CD8-positive, alpha-beta T cell (primary cell): ENCODE measurements at regions of chr12 and their contacts with region 1.

Region 1: DNA sequence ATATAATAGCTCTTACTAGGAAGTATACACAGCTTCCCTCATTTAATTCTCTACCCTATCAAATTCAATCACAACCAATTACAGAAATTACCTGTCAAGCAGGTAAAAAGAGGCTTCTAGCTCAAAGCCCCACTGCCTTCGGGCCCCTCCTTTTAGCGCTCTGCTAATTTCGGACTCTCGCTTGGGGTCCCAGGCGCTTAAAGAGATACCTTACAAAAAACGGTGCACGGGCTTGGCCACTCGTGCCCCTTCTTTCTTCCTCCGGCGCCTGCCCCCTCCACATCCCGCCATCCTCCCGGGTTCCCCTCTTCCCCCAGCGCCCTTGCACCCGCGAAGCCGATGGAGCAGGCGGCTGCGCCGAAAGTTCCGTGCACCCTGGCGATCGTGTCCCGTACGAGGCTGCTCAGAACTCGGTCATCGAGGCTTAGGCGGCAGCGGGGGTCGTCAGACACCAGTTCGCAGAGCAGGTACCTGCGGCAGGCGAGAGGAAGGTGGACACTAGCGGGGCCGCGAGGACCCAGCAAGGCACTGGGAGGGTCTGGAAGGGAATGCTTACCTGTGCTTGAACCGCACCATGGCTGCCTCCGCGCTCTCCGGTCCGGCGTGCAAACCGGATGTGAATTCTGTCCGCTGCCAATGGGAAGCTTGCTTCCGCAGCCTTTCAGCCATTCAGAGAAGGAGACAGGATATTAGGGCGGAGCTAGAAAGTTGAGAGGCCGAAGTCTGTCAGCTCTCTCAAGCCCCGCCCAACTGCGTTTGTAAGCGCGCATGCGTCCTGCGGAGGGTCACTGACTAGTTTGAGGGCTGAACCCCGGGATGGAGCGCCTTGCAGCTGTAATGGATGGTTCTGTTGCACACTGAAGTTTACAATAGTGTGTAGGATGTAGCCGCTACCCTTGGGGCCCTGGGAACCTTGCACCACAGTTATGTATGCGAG is at the start of gene POP5:
- DNase-seq: peak; percentile 81 to 98 (median 92)
- ATAC-seq: peak; percentile 92
- H3K4me3 ChIP-seq: peak within 1 kb of the TSS; percentile 91 to 94
- H3K4me3 Mint-ChIP-seq: peak within 1 kb of the TSS; percentile 99
- H3K27ac ChIP-seq: peak within 1 kb of the TSS; percentile 71 to 76
- H3K27ac Mint-ChIP-seq: peak within 1 kb of the TSS; percentile 93
- H3K4me1 ChIP-seq: peaks cover 23% of the 10 kb centered on the region
- H3K4me1 Mint-ChIP-seq: peaks cover 44% of the 10 kb centered on the region
- H3K27me3 ChIP-seq: peaks cover 0 to 7% of the 10 kb centered on the region in 2 experiments
- H3K27me3 Mint-ChIP-seq: peaks cover 12% of the 10 kb centered on the region
- CTCF ChIP-seq: no peak
- total RNA-seq, gene POP5: 18.1 to 19.2 TPM

Region 2: DNA sequence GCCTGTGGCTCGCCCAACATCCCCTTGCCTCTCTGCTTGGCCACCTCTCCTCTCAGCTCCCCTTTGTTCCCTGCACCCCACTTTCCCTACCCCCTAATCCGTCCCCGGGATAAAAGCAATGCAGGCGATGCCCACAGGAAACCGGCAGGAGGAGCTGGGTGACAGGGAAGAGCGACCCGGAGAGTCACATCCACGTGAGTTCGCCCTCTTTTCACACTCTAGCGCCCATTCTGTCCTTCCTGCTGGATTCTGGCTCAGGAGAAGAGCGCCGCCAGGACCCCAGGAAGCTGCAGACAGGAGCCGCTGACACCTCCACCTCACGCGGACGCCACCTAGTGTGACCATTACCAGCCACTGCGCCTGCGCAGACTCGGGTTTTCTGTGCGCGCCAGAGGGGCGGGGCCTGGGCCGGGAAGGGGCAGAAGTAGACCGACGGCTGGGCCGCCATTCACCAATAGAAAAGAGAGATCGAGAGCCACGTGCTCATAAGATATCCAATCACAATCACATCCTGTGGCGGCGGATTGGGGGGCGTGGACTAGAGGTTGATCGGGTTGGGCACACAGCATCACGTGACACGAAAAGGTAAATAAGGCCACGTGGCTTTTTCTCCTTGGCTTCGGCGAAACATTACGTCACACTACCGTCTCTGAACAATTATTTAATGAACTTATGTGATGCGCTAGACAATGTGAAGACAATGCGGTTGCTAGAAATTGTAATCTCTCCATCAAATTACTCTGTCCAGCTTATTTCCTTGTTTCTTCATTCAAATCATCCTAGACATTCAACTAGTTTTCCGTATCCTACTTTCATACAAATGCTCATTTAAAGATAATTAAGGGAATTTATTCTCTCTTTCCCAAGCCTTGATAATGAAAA is 263.6 kb before region 1 on chr12:
- CTCF ChIA-PET with region 1: no interaction called
- POLR2A ChIA-PET with region 1: no interaction called
- intact Hi-C with region 1: loop called in 1 of 2 experiments (anchors 5 kb)
- DNase-seq: peak; percentile 99 to 100 (median 100)
- ATAC-seq: peak; percentile 98
- H3K4me3 ChIP-seq: peak overlapping the region; percentile 61 to 65
- H3K4me3 Mint-ChIP-seq: peak overlapping the region; percentile 88
- H3K27ac ChIP-seq: peak overlapping the region; percentile 75 to 86
- H3K27ac Mint-ChIP-seq: peak overlapping the region; percentile 97
- H3K4me1 ChIP-seq: peaks cover 5% of the 10 kb centered on the region
- H3K4me1 Mint-ChIP-seq: peaks cover 13% of the 10 kb centered on the region
- H3K27me3 ChIP-seq: no peaks in the 10 kb centered on the region
- H3K27me3 Mint-ChIP-seq: no peaks in the 10 kb centered on the region
- CTCF ChIP-seq: peak; percentile 58

Region 3: GRCh38 chr12:120534203-120534702 is 46.8 kb before region 1 on chr12 and contains the start of gene RNF10:
- CTCF ChIA-PET with region 1: interaction called, 4 read pairs
- POLR2A ChIA-PET with region 1: interaction called, 14 read pairs
- intact Hi-C with region 1: loop called in 1 of 2 experiments (anchors 1 kb)
- DNase-seq: peak; percentile 48 to 92 (median 73)
- ATAC-seq: peak; percentile 69
- H3K4me3 ChIP-seq: peak within 1 kb of the TSS; percentile 89 to 95
- H3K4me3 Mint-ChIP-seq: peak within 1 kb of the TSS; percentile 96
- H3K27ac ChIP-seq: peak within 1 kb of the TSS; percentile 76 to 83
- H3K27ac Mint-ChIP-seq: peak within 1 kb of the TSS; percentile 95
- H3K4me1 ChIP-seq: peaks cover 38% of the 10 kb centered on the region
- H3K4me1 Mint-ChIP-seq: peaks cover 57% of the 10 kb centered on the region
- H3K27me3 ChIP-seq: no peaks in the 10 kb centered on the region
- H3K27me3 Mint-ChIP-seq: no peaks in the 10 kb centered on the region
- CTCF ChIP-seq: no peak
- total RNA-seq, gene RNF10: 402 to 410 TPM

Region 4: GRCh38 chr12:120649442-120650232 is 68.6 kb after region 1 on chr12:
- CTCF ChIA-PET with region 1: interaction called, 101 read pairs
- POLR2A ChIA-PET with region 1: interaction called, 5 read pairs
- intact Hi-C with region 1: loop called (anchors 1 kb)
- DNase-seq: no peak
- ATAC-seq: no peak
- H3K4me3 ChIP-seq: no peak overlapping the region
- H3K4me3 Mint-ChIP-seq: no peak overlapping the region
- H3K27ac ChIP-seq: no peak overlapping the region
- H3K27ac Mint-ChIP-seq: no peak overlapping the region
- H3K4me1 ChIP-seq: peaks cover 7% of the 10 kb centered on the region
- H3K4me1 Mint-ChIP-seq: peaks cover 9% of the 10 kb centered on the region
- H3K27me3 ChIP-seq: peaks cover 14 to 21% of the 10 kb centered on the region in 2 experiments
- H3K27me3 Mint-ChIP-seq: peaks cover 47% of the 10 kb centered on the region
- CTCF ChIP-seq: peak; percentile 23

Region 5: DNA sequence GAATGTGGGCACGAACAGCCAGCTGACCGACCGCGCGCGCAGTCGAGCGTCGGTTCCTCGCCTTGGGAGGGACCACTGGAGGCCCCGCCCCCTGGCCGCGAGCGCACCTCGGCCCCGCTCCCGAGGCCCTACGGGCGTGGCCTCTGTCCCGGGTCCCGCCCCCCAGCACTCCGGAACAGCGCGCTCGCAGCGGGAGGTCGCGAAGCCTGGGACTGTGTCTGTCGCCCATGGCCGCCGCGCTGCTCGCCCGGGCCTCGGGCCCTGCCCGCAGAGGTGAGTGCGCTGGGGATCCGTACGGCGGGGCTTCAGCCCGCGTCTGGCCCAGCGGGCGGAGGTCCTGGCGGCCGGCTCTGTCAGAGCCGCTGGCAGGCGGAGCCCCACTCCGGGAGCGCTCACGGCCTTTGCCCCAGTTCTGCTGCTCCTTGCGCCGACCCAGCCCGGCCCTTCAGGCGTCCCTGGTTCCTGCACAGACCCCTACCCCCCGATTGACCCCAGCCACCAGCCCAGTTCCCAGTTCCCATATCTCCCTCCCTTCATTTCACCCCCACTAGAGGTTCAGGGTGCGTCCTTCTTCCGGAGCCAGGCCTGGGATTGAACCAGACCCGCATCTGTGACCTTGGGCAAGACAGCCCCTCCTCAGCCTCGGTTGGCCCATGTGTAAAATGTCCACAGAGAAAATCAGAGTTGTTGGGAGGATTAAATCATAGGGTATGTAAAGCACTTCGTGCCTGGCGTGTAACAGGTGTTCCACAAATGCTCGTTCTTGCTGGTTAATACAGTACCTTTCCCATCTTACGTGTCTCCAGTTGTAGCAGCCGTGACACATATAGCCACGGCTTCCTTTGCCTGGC is 144.8 kb after region 1 on chr12 and contains the start of gene ACADS:
- CTCF ChIA-PET with region 1: interaction called, 3 read pairs
- POLR2A ChIA-PET with region 1: no interaction called
- intact Hi-C with region 1: loop called in 1 of 2 experiments (anchors 5 kb)
- DNase-seq: peak; percentile 75 to 93 (median 89)
- ATAC-seq: peak; percentile 100
- H3K4me3 ChIP-seq: peak within 1 kb of the TSS; percentile 49 to 64
- H3K4me3 Mint-ChIP-seq: peak within 1 kb of the TSS; percentile 93
- H3K27ac ChIP-seq: peak within 1 kb of the TSS; percentile 37 to 56
- H3K27ac Mint-ChIP-seq: peak within 1 kb of the TSS; percentile 84
- H3K4me1 ChIP-seq: peaks cover 13% of the 10 kb centered on the region
- H3K4me1 Mint-ChIP-seq: peaks cover 24% of the 10 kb centered on the region
- H3K27me3 ChIP-seq: no peaks in the 10 kb centered on the region
- H3K27me3 Mint-ChIP-seq: no peaks in the 10 kb centered on the region
- CTCF ChIP-seq: no peak
- total RNA-seq, gene ACADS: 7.3 to 9.1 TPM

Region 6: DNA sequence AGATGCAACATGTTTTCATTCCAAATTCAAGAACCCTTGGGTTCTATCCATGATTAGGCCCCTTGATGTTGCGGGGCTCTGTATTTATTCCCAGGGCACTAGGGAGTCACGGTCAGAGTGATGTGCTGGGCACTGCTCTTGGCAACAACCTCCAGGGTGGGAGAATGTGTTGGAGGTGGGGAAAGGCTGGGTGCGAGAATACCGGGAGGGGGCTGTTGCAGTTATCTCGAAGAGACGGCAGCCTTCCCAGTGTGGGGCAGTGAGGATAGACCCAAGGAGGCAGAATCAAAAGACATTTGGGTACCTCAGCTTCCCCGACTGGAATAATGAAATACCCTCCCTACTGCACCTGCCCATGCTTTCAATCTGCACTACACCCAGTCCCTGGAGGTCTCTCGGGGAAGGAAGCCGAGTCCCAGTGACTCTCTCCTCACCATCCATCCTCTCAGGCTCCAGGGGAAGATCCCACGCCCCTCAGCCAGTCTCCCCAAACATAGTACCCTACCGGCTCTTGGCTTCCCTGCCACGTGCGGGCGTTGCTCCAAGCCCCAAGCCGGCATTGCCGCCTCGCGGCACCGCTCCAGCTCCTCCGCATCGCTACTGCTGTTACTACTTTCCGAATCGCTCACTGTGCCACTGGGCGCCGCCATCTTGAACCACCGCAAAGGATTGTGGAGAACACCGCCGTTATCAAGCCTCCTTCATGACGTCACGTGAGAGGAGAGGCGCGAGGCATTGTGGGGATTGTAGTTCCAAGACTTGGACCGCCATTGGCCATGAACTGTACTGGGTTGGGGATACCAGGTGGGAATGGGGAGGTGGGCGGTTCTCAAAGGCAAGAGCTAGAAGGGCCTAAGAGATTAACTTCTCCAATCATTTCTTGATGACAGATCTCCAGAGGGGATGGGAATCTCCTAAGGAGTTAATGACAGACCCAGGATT is 435.0 kb after region 1 on chr12 and contains the start of gene C12orf43:
- CTCF ChIA-PET with region 1: no interaction called
- POLR2A ChIA-PET with region 1: no interaction called
- intact Hi-C with region 1: loop called in 1 of 2 experiments (anchors 2 kb)
- DNase-seq: peak; percentile 83 to 95 (median 92)
- ATAC-seq: peak; percentile 97
- H3K4me3 ChIP-seq: peak within 1 kb of the TSS; percentile 69 to 91
- H3K4me3 Mint-ChIP-seq: peak within 1 kb of the TSS; percentile 93
- H3K27ac ChIP-seq: peak within 1 kb of the TSS; percentile 60 to 89
- H3K27ac Mint-ChIP-seq: peak within 1 kb of the TSS; percentile 93
- H3K4me1 ChIP-seq: peaks cover 8% of the 10 kb centered on the region
- H3K4me1 Mint-ChIP-seq: peaks cover 21% of the 10 kb centered on the region
- H3K27me3 ChIP-seq: no peaks in the 10 kb centered on the region
- H3K27me3 Mint-ChIP-seq: no peaks in the 10 kb centered on the region
- CTCF ChIP-seq: no peak
- total RNA-seq, gene C12orf43: 20.7 to 21.4 TPM

Region 7: GRCh38 chr12:121296618-121297434 is 715.8 kb after region 1 on chr12 and contains the start of gene CAMKK2:
- CTCF ChIA-PET with region 1: no interaction called
- POLR2A ChIA-PET with region 1: no interaction called
- intact Hi-C with region 1: loop called in 1 of 2 experiments (anchors 5 kb)
- DNase-seq: peak; percentile 77 to 94 (median 85)
- ATAC-seq: peak; percentile 88
- H3K4me3 ChIP-seq: peak within 1 kb of the TSS; percentile 73 to 93
- H3K4me3 Mint-ChIP-seq: peak within 1 kb of the TSS; percentile 87
- H3K27ac ChIP-seq: peak within 1 kb of the TSS; percentile 31 to 59
- H3K27ac Mint-ChIP-seq: peak within 1 kb of the TSS; percentile 80
- H3K4me1 ChIP-seq: peaks cover 15% of the 10 kb centered on the region
- H3K4me1 Mint-ChIP-seq: peaks cover 20% of the 10 kb centered on the region
- H3K27me3 ChIP-seq: no peaks in the 10 kb centered on the region
- H3K27me3 Mint-ChIP-seq: no peaks in the 10 kb centered on the region
- CTCF ChIP-seq: no peak
- total RNA-seq, gene CAMKK2: 3.6 to 4.1 TPM